ENCODE measurements at regions of chr2 and their contacts with region 1.

Region 1: GRCh38 chr2:47724221-47724981 is 58.5 kb upstream of the MSH6 start:
- DNase-seq: peak; percentile 62
- ATAC-seq: peak; percentile 85
- H3K4me3 Mint-ChIP-seq: peak overlapping the region; percentile 61
- H3K27ac Mint-ChIP-seq: peak overlapping the region; percentile 97
- H3K4me1 Mint-ChIP-seq: peaks cover 78% of the 10 kb centered on the region
- H3K27me3 Mint-ChIP-seq: no peaks in the 10 kb centered on the region
- CTCF ChIP-seq: no peak

Region 2: GRCh38 chr2:46893269-46893945 is 831.0 kb before region 1 on chr2:
- CTCF ChIA-PET with region 1: no interaction called
- POLR2A ChIA-PET with region 1: no interaction called
- intact Hi-C with region 1: no loop called
- DNase-seq: no peak
- ATAC-seq: no peak
- H3K4me3 Mint-ChIP-seq: no peak overlapping the region
- H3K27ac Mint-ChIP-seq: no peak overlapping the region
- H3K4me1 Mint-ChIP-seq: no peaks in the 10 kb centered on the region
- H3K27me3 Mint-ChIP-seq: no peaks in the 10 kb centered on the region
- CTCF ChIP-seq: no peak

Region 3: GRCh38 chr2:47520825-47521665 is 203.4 kb before region 1 on chr2:
- CTCF ChIA-PET with region 1: no interaction called
- POLR2A ChIA-PET with region 1: interaction called, 4 read pairs
- intact Hi-C with region 1: loop called (anchors 1 kb)
- DNase-seq: peak; percentile 74
- ATAC-seq: peak; percentile 91
- H3K4me3 Mint-ChIP-seq: peak overlapping the region; percentile 85
- H3K27ac Mint-ChIP-seq: peak overlapping the region; percentile 87
- H3K4me1 Mint-ChIP-seq: peaks cover 13% of the 10 kb centered on the region
- H3K27me3 Mint-ChIP-seq: no peaks in the 10 kb centered on the region
- CTCF ChIP-seq: no peak

Region 4: DNA sequence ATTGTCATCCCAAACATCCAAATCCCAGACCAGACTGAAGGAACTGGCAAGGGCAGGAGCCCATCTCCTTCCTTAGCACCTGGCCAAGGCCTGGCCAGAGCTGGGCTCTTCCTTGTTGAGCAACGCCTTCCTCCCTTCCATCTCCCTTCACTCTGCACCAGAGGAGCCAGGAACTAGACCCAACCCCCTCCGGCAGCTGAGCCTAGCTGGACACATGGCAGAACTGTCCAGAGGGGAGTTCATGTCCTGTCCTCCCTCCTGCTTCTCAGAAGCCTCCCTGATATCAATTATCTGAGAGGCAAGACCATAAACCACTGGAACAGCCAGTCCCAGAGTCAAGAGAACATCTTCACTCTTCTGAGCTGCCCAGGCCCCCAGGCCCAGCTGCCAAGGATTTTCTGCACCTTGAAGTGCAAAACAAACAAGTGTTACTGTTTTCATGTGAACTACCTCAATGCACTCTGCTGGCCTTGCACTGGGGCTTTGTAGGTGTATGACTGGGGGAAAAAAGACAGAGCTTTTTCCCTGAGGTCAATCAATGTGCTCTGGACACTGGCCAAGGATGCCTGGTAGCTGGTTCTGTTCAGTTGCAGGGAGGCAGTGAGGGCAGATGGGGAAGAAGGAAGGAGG is 49.1 kb before region 1 on chr2:
- CTCF ChIA-PET with region 1: no interaction called
- POLR2A ChIA-PET with region 1: no interaction called
- intact Hi-C with region 1: no loop called
- DNase-seq: no peak
- ATAC-seq: no peak
- H3K4me3 Mint-ChIP-seq: no peak overlapping the region
- H3K27ac Mint-ChIP-seq: no peak overlapping the region
- H3K4me1 Mint-ChIP-seq: no peaks in the 10 kb centered on the region
- H3K27me3 Mint-ChIP-seq: no peaks in the 10 kb centered on the region
- CTCF ChIP-seq: no peak

Region 5: GRCh38 chr2:47688561-47688960 is 35.8 kb before region 1 on chr2:
- CTCF ChIA-PET with region 1: no interaction called
- POLR2A ChIA-PET with region 1: interaction called, 4 read pairs
- intact Hi-C with region 1: loop called (anchors 5 kb)
- DNase-seq: no peak
- ATAC-seq: no peak
- H3K4me3 Mint-ChIP-seq: no peak overlapping the region
- H3K27ac Mint-ChIP-seq: peak overlapping the region; percentile 32
- H3K4me1 Mint-ChIP-seq: peaks cover 25% of the 10 kb centered on the region
- H3K27me3 Mint-ChIP-seq: no peaks in the 10 kb centered on the region
- CTCF ChIP-seq: no peak

Region 6: GRCh38 chr2:47708801-47709499 is 15.5 kb before region 1 on chr2:
- CTCF ChIA-PET with region 1: interaction called, 3 read pairs
- POLR2A ChIA-PET with region 1: interaction called, 46 read pairs
- intact Hi-C with region 1: loop called (anchors 1 kb)
- DNase-seq: no peak
- ATAC-seq: peak; percentile 92
- H3K4me3 Mint-ChIP-seq: peak overlapping the region; percentile 41
- H3K27ac Mint-ChIP-seq: peak overlapping the region; percentile 91
- H3K4me1 Mint-ChIP-seq: peaks cover 26% of the 10 kb centered on the region
- H3K27me3 Mint-ChIP-seq: no peaks in the 10 kb centered on the region
- CTCF ChIP-seq: no peak

Region 7: DNA sequence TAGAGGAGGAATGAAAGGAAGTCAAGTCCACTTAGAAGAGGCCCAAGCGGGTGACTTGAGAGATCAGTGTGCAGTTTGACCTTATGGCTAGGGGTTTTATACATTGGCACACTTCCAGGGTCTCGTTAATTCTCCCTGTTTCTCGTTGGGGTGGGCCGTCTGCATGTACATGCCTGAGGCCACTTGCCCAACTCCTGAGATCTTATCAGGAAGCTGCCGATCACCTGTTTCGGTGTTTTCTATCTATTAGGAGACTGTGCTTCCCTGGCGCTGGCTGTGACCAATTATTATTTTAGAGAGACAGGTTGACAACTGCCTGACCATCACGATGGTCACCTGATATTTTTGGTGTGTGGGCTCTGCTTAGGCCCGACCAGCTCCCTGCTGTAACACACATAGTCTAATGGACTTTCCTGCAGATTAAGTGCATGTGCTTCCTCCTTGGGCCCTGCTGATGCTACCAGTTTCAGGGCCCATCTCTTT is 27.5 kb after region 1 on chr2:
- CTCF ChIA-PET with region 1: no interaction called
- POLR2A ChIA-PET with region 1: interaction called, 6 read pairs
- intact Hi-C with region 1: loop called (anchors 1 kb)
- DNase-seq: no peak
- ATAC-seq: no peak
- H3K4me3 Mint-ChIP-seq: no peak overlapping the region
- H3K27ac Mint-ChIP-seq: peak overlapping the region; percentile 81
- H3K4me1 Mint-ChIP-seq: peaks cover 34% of the 10 kb centered on the region
- H3K27me3 Mint-ChIP-seq: no peaks in the 10 kb centered on the region
- CTCF ChIP-seq: no peak

Region 8: DNA sequence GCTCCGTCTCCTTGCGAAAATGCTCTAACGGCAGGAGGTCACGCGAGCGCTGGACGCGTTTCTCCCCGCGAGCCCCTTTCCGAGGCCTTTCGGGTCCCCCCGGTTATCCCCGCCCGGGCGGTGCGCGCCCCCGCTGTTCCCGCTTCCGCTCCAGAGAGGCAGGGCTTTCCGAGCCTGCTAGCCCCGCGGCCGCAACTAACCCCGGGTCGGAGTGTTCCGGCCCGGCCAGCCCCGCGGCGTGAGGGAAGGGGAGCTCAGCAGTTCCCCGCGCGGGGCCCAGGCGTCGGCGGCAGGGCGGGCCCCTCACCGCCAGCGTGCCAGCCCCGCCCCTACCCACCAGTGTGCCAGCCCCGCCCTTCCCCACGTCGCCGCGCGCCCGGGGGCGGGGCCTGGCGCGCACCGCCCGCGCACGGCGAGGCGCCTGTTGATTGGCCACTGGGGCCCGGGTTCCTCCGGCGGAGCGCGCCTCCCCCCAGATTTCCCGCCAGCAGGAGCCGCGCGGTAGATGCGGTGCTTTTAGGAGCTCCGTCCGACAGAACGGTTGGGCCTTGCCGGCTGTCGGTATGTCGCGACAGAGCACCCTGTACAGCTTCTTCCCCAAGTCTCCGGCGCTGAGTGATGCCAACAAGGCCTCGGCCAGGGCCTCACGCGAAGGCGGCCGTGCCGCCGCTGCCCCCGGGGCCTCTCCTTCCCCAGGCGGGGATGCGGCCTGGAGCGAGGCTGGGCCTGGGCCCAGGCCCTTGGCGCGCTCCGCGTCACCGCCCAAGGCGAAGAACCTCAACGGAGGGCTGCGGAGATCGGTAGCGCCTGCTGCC is 58.5 kb after region 1 on chr2 and contains the start of gene MSH6:
- CTCF ChIA-PET with region 1: no interaction called
- POLR2A ChIA-PET with region 1: interaction called, 11 read pairs
- intact Hi-C with region 1: loop called (anchors 1 kb)
- DNase-seq: peak; percentile 93
- ATAC-seq: peak; percentile 89
- H3K4me3 Mint-ChIP-seq: peak within 1 kb of the TSS; percentile 92
- H3K27ac Mint-ChIP-seq: peak within 1 kb of the TSS; percentile 83
- H3K4me1 Mint-ChIP-seq: peaks cover 22% of the 10 kb centered on the region
- H3K27me3 Mint-ChIP-seq: no peaks in the 10 kb centered on the region
- CTCF ChIP-seq: no peak
- total RNA-seq, gene MSH6: 40.6 and 42.1 TPM in 2 replicates